H1 (cell line): ENCODE measurements at regions of chr11 and their contacts with region 1.

Region 1: DNA sequence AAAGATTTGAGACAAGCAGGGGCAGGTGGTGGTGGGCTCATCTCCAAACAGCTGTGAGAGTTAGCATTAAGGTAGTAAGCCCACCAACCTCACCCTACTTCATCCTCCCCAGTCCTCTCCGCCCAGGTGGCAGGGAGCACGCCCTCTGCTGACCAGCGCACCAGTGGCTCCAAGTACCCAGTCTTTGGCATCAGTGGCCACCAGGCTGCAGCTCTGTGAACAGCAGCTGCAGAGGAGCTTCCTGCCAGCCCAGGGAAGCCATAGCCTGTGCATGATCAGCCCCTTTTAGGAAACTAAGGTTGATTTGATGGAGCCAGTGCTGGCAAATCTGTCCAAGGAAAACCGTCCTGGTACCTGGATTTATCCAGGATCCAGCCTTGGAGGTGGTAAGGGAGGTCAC is 21.7 kb downstream of the CAVIN3 start:
- DNase-seq: peak in 1 of 2 experiments; percentile 81
- H3K4me3 ChIP-seq: no peak overlapping the region
- H3K27ac ChIP-seq: no peak overlapping the region
- H3K4me1 ChIP-seq: peaks cover 1 to 7% (median 2%) of the 10 kb centered on the region in 4 experiments; a peak in 5 of 7 replicates
- H3K27me3 ChIP-seq: no peaks in the 10 kb centered on the region; a peak in 1 of 7 replicates
- CTCF ChIP-seq: peak; percentile 100
- EP300 ChIP-seq: no peak
- POLR2A ChIP-seq: no peak
- RAD21 ChIP-seq: peak; percentile 72 to 86

Region 2: DNA sequence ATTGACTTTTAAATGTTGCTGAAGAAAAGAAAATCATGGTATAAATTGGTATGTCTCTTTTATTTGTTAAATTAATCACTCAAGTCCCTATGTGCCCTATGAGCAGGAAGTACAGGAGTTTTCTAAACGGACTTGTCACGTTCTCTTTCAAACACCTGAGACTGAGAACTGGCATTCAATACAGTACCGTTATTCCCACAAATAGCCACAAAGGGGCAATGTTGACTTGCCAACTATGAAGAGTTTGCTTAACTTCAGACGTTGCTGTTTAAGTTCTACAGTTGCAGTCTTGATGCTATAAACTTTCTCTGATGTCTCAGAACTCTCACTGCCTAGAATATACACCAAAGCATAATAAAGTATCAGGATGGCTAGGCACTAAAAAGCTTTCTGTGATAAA is 275.6 kb before region 1 on chr11:
- CTCF ChIA-PET with region 1: interaction called, 12 read pairs
- POLR2A ChIA-PET with region 1: interaction called, 3 read pairs
- DNase-seq: no peak
- H3K4me3 ChIP-seq: no peak overlapping the region
- H3K27ac ChIP-seq: no peak overlapping the region
- H3K4me1 ChIP-seq: no peaks in the 10 kb centered on the region
- H3K27me3 ChIP-seq: no peaks in the 10 kb centered on the region
- CTCF ChIP-seq: peak in 2 of 3 experiments; percentile 70 to 81; a peak in 3 of 4 replicates
- EP300 ChIP-seq: no peak
- POLR2A ChIP-seq: no peak
- RAD21 ChIP-seq: peak; percentile 95 to 97

Region 3: GRCh38 chr11:6142936-6143335 is 155.7 kb before region 1 on chr11:
- CTCF ChIA-PET with region 1: no interaction called
- POLR2A ChIA-PET with region 1: no interaction called
- DNase-seq: no peak
- H3K4me3 ChIP-seq: no peak overlapping the region
- H3K27ac ChIP-seq: no peak overlapping the region
- H3K4me1 ChIP-seq: no peaks in the 10 kb centered on the region
- H3K27me3 ChIP-seq: no peaks in the 10 kb centered on the region
- CTCF ChIP-seq: no peak
- EP300 ChIP-seq: no peak
- POLR2A ChIP-seq: no peak
- RAD21 ChIP-seq: no peak

Region 4: GRCh38 chr11:6269994-6270393 is 28.6 kb before region 1 on chr11:
- CTCF ChIA-PET with region 1: interaction called, 18 read pairs
- POLR2A ChIA-PET with region 1: no interaction called
- DNase-seq: peak in 1 of 2 experiments; percentile 69
- H3K4me3 ChIP-seq: no peak overlapping the region
- H3K27ac ChIP-seq: no peak overlapping the region
- H3K4me1 ChIP-seq: peaks cover 0 to 4% (median 0%) of the 10 kb centered on the region in 4 experiments; a peak in 1 of 7 replicates
- H3K27me3 ChIP-seq: peaks cover 0 to 2% (median 0%) of the 10 kb centered on the region in 4 experiments; a peak in 1 of 7 replicates
- CTCF ChIP-seq: peak; percentile 63 to 88 (median 69)
- EP300 ChIP-seq: no peak
- POLR2A ChIP-seq: no peak
- RAD21 ChIP-seq: peak; percentile 50 to 63

Region 5: GRCh38 chr11:6285019-6285418 is 13.6 kb before region 1 on chr11:
- CTCF ChIA-PET with region 1: interaction called, 127 read pairs
- POLR2A ChIA-PET with region 1: interaction called, 3 read pairs
- DNase-seq: no peak
- H3K4me3 ChIP-seq: no peak overlapping the region
- H3K27ac ChIP-seq: no peak overlapping the region
- H3K4me1 ChIP-seq: peaks cover 0 to 2% (median 0%) of the 10 kb centered on the region in 4 experiments; a peak in 2 of 7 replicates
- H3K27me3 ChIP-seq: peaks cover 12 to 75% (median 45%) of the 10 kb centered on the region in 4 experiments
- CTCF ChIP-seq: no peak
- EP300 ChIP-seq: no peak
- POLR2A ChIP-seq: no peak
- RAD21 ChIP-seq: no peak

Region 6: GRCh38 chr11:6315811-6316425 is 17.3 kb after region 1 on chr11:
- CTCF ChIA-PET with region 1: interaction called, 120 read pairs
- POLR2A ChIA-PET with region 1: interaction called, 4 read pairs
- DNase-seq: peak in 1 of 2 experiments; percentile 65
- H3K4me3 ChIP-seq: no peak overlapping the region
- H3K27ac ChIP-seq: no peak overlapping the region
- H3K4me1 ChIP-seq: peaks cover 2 to 24% (median 16%) of the 10 kb centered on the region in 4 experiments
- H3K27me3 ChIP-seq: peaks cover 0 to 3% (median 1%) of the 10 kb centered on the region in 4 experiments; a peak in 1 of 7 replicates
- CTCF ChIP-seq: peak; percentile 92 to 97 (median 96)
- EP300 ChIP-seq: no peak
- POLR2A ChIP-seq: no peak
- RAD21 ChIP-seq: peak; percentile 92 to 95

Region 7: DNA sequence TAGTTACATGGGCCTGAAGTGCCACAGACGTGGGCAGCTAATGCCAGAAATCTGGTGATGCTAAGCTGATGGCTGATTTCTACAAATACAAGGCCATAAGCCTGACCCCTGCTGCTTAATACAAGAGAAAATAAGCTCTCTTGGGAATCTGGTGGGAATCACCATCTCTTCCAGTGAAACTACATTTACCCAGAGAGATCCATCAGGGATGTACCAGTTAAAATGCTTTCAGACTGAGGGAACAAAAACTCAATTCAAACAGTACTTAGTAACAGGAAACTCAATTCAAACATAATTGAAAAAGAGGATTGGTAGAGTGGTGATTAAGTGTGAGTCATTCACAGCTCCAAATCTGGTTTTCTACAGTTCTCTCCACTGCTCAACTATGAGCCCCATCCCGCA is 23.4 kb after region 1 on chr11:
- CTCF ChIA-PET with region 1: interaction called, 120 read pairs
- POLR2A ChIA-PET with region 1: interaction called, 5 read pairs
- DNase-seq: no peak
- H3K4me3 ChIP-seq: no peak overlapping the region
- H3K27ac ChIP-seq: no peak overlapping the region
- H3K4me1 ChIP-seq: peaks cover 12 to 47% (median 32%) of the 10 kb centered on the region in 4 experiments
- H3K27me3 ChIP-seq: peaks cover 0 to 3% (median 1%) of the 10 kb centered on the region in 4 experiments; a peak in 1 of 7 replicates
- CTCF ChIP-seq: no peak
- EP300 ChIP-seq: no peak
- POLR2A ChIP-seq: no peak
- RAD21 ChIP-seq: no peak